Right cardiac atrium (tissue), 5 donors: ENCODE measurements at regions of chr7 and their contacts with region 1.

Region 1: GRCh38 chr7:4689668-4690067 is 7.6 kb downstream of the FOXK1 start:
- DNase-seq: no peak
- ATAC-seq: no peak
- H3K4me3 ChIP-seq: no peak overlapping the region
- H3K27ac ChIP-seq: no peak overlapping the region
- H3K4me1 ChIP-seq: peaks cover 9% of the 10 kb centered on the region
- H3K27me3 ChIP-seq: no peaks in the 10 kb centered on the region

Region 2: DNA sequence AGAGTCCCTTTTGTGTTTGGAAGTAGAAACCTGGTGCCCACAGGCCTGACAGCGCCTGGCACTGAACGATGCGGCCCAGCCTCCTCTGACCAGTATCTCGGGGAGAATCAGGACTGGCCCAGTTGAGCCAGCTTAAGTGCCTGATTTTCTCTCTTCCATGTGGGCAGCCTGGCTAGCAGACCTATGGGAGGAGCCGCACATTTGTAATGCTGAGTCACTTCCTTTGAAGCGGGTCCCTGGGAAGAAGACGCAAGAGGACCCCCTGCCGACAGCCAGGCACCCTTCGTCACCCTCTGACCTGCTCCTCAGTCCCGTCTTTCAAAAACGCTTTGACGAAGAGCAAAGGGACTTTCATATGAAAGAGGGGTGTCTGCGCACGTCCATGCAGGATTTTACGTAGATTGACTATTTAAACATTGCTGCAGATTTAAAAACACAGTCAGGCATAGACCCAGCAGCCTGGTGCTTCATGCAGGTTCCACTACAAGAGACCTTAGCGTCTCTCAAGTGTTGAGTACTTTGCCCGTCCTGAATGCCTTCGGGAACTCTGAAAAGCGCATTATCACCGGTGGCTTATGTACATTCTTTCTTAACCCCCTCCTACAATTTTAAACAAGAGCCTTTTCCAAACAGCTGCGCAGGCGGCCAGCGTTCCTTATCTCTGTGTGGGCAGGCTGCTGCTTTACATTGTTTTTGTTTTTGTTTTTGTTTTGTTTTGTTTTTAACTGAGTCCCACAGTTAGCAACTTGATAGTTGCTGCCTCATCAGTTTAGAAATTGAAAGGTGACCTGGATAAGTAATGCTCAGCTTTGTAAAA is 49.3 kb after region 1 on chr7:
- intact Hi-C with region 1: loop called in 2 of 4 experiments (anchors 5 to 10 kb)
- DNase-seq: peak; percentile 56 to 72 (median 65)
- ATAC-seq: peak; percentile 55 to 79
- H3K4me3 ChIP-seq: peak overlapping the region; percentile 34
- H3K27ac ChIP-seq: peak overlapping the region; percentile 71
- H3K4me1 ChIP-seq: peaks cover 5% of the 10 kb centered on the region
- H3K27me3 ChIP-seq: no peaks in the 10 kb centered on the region